Activated naive CD4-positive, alpha-beta T cell treated with anti-CD3 and anti-CD28 coated beads for 36 hours (primary cell): ENCODE measurements at regions of chr1 and their contacts with region 1.

Region 1: GRCh38 chr1:204398217-204399081 is 13.2 kb downstream of the PPP1R15B start:
- DNase-seq: peak; percentile 73
- H3K4me3 Mint-ChIP-seq: no peak overlapping the region
- H3K27ac Mint-ChIP-seq: peak overlapping the region; percentile 87
- H3K4me1 Mint-ChIP-seq: peaks cover 10% of the 10 kb centered on the region
- H3K27me3 Mint-ChIP-seq: no peaks in the 10 kb centered on the region

Region 2: DNA sequence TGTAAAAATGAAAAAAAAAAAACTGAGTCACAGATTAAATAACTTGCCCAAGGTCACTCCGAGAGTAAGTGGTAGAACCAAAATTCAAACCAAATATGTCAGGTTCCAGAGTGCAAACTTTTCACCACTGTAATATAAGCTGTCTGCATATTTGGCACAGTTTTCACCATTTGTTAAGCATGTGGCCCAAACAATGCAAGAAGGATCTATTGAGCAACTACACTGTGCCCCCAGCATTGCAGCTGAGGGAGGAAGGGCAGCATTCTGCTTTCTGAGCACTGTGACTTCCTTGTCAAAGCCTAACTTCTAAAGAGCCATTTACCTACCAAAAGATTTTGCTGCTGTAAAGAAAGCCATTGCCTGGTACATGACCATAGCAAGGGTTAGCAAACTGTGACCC is 1821.6 kb before region 1 on chr1:
- CTCF ChIA-PET with region 1: no interaction called
- intact Hi-C with region 1: no loop called
- DNase-seq: no peak
- H3K4me3 Mint-ChIP-seq: no peak overlapping the region
- H3K27ac Mint-ChIP-seq: no peak overlapping the region
- H3K4me1 Mint-ChIP-seq: no peaks in the 10 kb centered on the region
- H3K27me3 Mint-ChIP-seq: no peaks in the 10 kb centered on the region

Region 3: GRCh38 chr1:204213668-204214662 is 184.5 kb before region 1 on chr1 and contains the start of gene GOLT1A:
- CTCF ChIA-PET with region 1: interaction called, 5 read pairs
- intact Hi-C with region 1: loop called (anchors 1 kb)
- DNase-seq: peak; percentile 74
- H3K4me3 Mint-ChIP-seq: peak within 1 kb of the TSS; percentile 20
- H3K27ac Mint-ChIP-seq: no peak within 1 kb of the TSS
- H3K4me1 Mint-ChIP-seq: peaks cover 5% of the 10 kb centered on the region
- H3K27me3 Mint-ChIP-seq: no peaks in the 10 kb centered on the region
- total RNA-seq, gene GOLT1A: not detected

Region 4: GRCh38 chr1:204257954-204258752 is 140.3 kb before region 1 on chr1:
- CTCF ChIA-PET with region 1: interaction called, 8 read pairs
- intact Hi-C with region 1: loop called (anchors 1 kb)
- DNase-seq: peak; percentile 62
- H3K4me3 Mint-ChIP-seq: no peak overlapping the region
- H3K27ac Mint-ChIP-seq: no peak overlapping the region
- H3K4me1 Mint-ChIP-seq: no peaks in the 10 kb centered on the region
- H3K27me3 Mint-ChIP-seq: no peaks in the 10 kb centered on the region

Region 5: GRCh38 chr1:204377795-204378608 is 20.4 kb before region 1 on chr1:
- CTCF ChIA-PET with region 1: interaction called, 34 read pairs
- intact Hi-C with region 1: loop called (anchors 2 kb)
- DNase-seq: peak; percentile 55
- H3K4me3 Mint-ChIP-seq: peak overlapping the region; percentile 77
- H3K27ac Mint-ChIP-seq: no peak overlapping the region
- H3K4me1 Mint-ChIP-seq: peaks cover 13% of the 10 kb centered on the region
- H3K27me3 Mint-ChIP-seq: peaks cover 12% of the 10 kb centered on the region

Region 6: GRCh38 chr1:204384994-204385352 is 13.5 kb before region 1 on chr1:
- CTCF ChIA-PET with region 1: interaction called, 34 read pairs
- intact Hi-C with region 1: loop called (anchors 2 kb)
- DNase-seq: no peak
- H3K4me3 Mint-ChIP-seq: no peak overlapping the region
- H3K27ac Mint-ChIP-seq: no peak overlapping the region
- H3K4me1 Mint-ChIP-seq: peaks cover 3% of the 10 kb centered on the region
- H3K27me3 Mint-ChIP-seq: no peaks in the 10 kb centered on the region

Region 7: DNA sequence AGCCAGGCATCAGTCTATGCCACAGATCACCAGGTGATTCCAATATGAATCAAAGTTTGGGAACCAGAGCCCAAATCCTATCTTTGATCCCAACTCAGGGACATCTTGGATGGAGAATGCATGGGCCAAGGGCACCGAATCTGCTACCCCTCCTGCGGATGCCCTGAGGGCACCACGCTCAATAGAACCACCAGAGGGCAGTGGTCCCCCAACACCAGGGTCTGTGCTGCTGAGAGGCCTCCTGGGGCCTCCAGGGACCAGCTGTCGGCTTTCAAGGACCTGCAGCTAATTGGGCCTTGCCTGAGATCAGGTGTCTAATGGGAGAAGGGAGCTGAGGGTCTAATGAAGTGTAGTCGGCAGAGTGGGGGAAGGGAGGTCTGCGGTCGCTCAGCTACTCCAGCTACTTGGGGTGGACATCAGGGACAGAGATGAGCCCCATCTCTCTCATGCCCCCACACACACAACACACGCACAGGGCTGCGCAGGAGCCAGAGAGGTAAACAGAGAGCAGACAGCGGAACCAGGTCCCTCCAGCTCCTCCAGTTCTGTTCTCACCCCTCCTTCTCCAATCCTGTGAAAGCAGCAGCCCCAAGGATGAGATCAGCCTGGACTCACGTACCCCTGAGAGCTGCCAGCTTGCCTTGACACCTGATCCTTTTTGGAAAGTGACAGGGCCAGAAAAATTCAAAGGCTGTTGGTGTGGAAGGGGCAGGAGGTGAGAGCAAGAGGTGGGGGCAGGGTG is 48.1 kb after region 1 on chr1:
- CTCF ChIA-PET with region 1: interaction called, 12 read pairs
- intact Hi-C with region 1: no loop called
- DNase-seq: peak; percentile 88
- H3K4me3 Mint-ChIP-seq: no peak overlapping the region
- H3K27ac Mint-ChIP-seq: peak overlapping the region; percentile 77
- H3K4me1 Mint-ChIP-seq: peaks cover 54% of the 10 kb centered on the region
- H3K27me3 Mint-ChIP-seq: no peaks in the 10 kb centered on the region

Region 8: GRCh38 chr1:204640578-204640977 is 242.1 kb after region 1 on chr1:
- CTCF ChIA-PET with region 1: no interaction called
- intact Hi-C with region 1: no loop called
- DNase-seq: no peak
- H3K4me3 Mint-ChIP-seq: no peak overlapping the region
- H3K27ac Mint-ChIP-seq: no peak overlapping the region
- H3K4me1 Mint-ChIP-seq: no peaks in the 10 kb centered on the region
- H3K27me3 Mint-ChIP-seq: no peaks in the 10 kb centered on the region